Heart left ventricle (tissue), 16 donors: ENCODE measurements at regions of chr5 and their contacts with region 1.

Region 1: DNA sequence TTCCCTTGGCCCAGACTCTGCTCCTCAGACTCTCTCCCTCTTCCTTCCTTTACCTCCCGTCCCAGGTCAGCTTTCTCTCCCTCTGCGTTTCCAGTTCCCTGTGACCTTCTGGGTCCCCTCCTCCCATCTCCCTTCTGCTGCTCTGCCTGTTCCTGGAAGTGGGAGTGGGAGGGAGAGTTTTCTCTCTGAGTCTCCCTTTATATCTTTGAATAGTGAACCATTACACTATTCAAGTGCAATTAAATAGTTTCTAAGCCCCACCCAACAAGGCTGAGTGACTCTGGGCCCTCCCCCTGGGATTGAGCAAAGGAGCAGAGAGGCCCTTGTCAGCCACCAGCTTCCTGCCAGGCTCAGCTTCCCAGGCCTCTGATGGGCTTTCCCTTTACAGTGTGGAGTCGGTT is 34.8 kb downstream of the THBS4 start:
- DNase-seq: peak in 3 of 5 donors; percentile 45 to 64 (median 57)
- ATAC-seq: peak in 3 of 4 donors; percentile 55 to 81 (median 77)
- H3K4me3 ChIP-seq: peak overlapping the region in 1 of 12 donors; percentile 10
- H3K27ac ChIP-seq: peak overlapping the region in 11 of 12 donors; percentile 6 to 75 (median 55)
- H3K4me1 ChIP-seq: peaks cover 0 to 30% (median 14%) of the 10 kb centered on the region in 12 donors
- H3K27me3 ChIP-seq: no peaks in the 10 kb centered on the region
- CTCF ChIP-seq: no peak
- POLR2A ChIP-seq: no peak

Region 2: GRCh38 chr5:79235634-79236363 is 834.1 kb before region 1 on chr5 and contains the start of gene JMY:
- intact Hi-C with region 1: loop called in 1 of 10 experiments (anchors 10 kb)
- DNase-seq: peak; percentile 87 to 92 (median 90)
- ATAC-seq: peak; percentile 77 to 96 (median 94)
- H3K4me3 ChIP-seq: peak within 1 kb of the TSS; percentile 73 to 96 (median 92)
- H3K27ac ChIP-seq: peak within 1 kb of the TSS; percentile 79 to 98 (median 88)
- H3K4me1 ChIP-seq: peaks cover 0 to 40% (median 22%) of the 10 kb centered on the region in 12 donors
- H3K27me3 ChIP-seq: no peaks in the 10 kb centered on the region
- CTCF ChIP-seq: peak in 6 of 12 donors; percentile 14 to 34 (median 25)
- POLR2A ChIP-seq: peak in 1 of 2 donors; percentile 76
- total RNA-seq, gene JMY: 10.0 to 16.9 (median 11.5) TPM

Region 3: GRCh38 chr5:79962575-79963222 is 107.2 kb before region 1 on chr5:
- intact Hi-C with region 1: loop called in 1 of 10 experiments (anchors 10 kb)
- DNase-seq: no peak
- ATAC-seq: no peak
- H3K4me3 ChIP-seq: no peak overlapping the region
- H3K27ac ChIP-seq: no peak overlapping the region
- H3K4me1 ChIP-seq: no peaks in the 10 kb centered on the region
- H3K27me3 ChIP-seq: no peaks in the 10 kb centered on the region
- CTCF ChIP-seq: no peak
- POLR2A ChIP-seq: no peak